A549 (cell line): ENCODE measurements at regions of chr11 and their contacts with region 1.

Region 1: GRCh38 chr11:69101115-69101791 is 52.5 kb downstream of the TPCN2 start:
- DNase-seq: peak; percentile 81 to 91
- ATAC-seq: peak; percentile 80 to 89
- H3K4me3 ChIP-seq: no peak overlapping the region
- H3K27ac ChIP-seq: peak overlapping the region; percentile 63 to 71; a peak in 5 of 6 replicates
- H3K4me1 ChIP-seq: peaks cover 28% of the 10 kb centered on the region
- CTCF ChIP-seq: peak; percentile 97
- EP300 ChIP-seq: no peak
- POLR2A ChIP-seq: no peak
- RAD21 ChIP-seq: peak; percentile 99

Region 2: DNA sequence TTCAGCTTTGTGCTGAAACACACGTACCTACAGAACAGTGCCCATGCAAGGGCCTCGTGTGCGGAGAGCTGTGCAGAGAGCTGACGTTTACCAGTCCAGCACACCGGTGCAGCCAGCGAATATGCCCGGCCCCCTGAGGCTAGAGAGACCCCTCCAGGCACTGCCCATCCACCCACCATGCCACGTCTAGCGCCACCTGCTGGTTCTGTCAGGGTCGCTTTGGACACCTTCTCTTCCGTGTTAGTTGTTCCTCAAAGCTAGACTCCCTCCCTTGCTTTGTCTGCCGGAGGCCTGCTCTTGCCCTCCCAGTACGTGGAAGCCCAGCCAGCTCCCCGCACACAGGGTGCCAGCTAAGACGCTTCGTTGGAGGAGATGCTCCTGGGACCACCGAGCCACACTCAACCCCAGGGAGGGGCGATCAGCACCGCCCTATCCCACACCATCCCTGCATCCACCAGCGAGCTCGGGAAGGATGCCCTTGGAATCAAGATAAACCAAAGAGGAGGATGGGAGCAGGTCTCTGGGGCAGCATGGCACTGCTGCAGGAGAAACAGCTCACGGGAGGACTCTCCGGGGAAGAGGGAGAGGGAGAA is 302.9 kb before region 1 on chr11:
- CTCF ChIA-PET with region 1: no interaction called
- POLR2A ChIA-PET with region 1: no interaction called
- DNase-seq: no peak
- ATAC-seq: peak; percentile 39 to 85; a peak in 5 of 6 replicates
- H3K4me3 ChIP-seq: no peak overlapping the region
- H3K27ac ChIP-seq: no peak overlapping the region
- H3K4me1 ChIP-seq: no peaks in the 10 kb centered on the region
- CTCF ChIP-seq: peak; percentile 48
- EP300 ChIP-seq: no peak
- POLR2A ChIP-seq: no peak
- RAD21 ChIP-seq: peak; percentile 28 to 33; a peak in 2 of 5 replicates

Region 3: GRCh38 chr11:69014084-69014851 is 87.0 kb before region 1 on chr11:
- CTCF ChIA-PET with region 1: no interaction called
- POLR2A ChIA-PET with region 1: no interaction called
- DNase-seq: no peak
- ATAC-seq: no peak
- H3K4me3 ChIP-seq: no peak overlapping the region
- H3K27ac ChIP-seq: no peak overlapping the region
- H3K4me1 ChIP-seq: peaks cover 16% of the 10 kb centered on the region
- CTCF ChIP-seq: no peak
- EP300 ChIP-seq: no peak
- POLR2A ChIP-seq: no peak
- RAD21 ChIP-seq: no peak

Region 4: DNA sequence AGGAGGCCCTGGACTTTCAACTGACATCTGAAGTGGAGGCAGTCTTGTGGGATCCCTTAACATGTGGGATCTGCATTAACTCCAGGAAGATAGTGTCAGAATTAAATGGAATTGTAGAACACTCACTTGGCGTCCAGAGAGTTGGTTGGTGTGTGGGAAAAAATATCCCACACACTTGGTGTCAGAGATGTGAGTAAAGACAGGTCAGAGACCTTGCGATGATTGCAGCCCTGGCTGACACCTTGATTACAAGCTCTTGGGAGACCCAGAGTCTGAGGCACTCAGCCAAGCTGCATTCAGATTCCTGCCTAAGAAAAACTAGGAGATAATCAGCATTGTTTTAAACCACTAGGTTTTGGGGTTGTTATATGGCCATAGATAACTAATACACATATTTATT is 59.7 kb before region 1 on chr11:
- CTCF ChIA-PET with region 1: no interaction called
- POLR2A ChIA-PET with region 1: no interaction called
- DNase-seq: no peak
- ATAC-seq: no peak
- H3K4me3 ChIP-seq: no peak overlapping the region
- H3K27ac ChIP-seq: no peak overlapping the region
- H3K4me1 ChIP-seq: peaks cover 11% of the 10 kb centered on the region; the same call in 2 of the 3 replicates
- CTCF ChIP-seq: no peak
- EP300 ChIP-seq: no peak
- POLR2A ChIP-seq: no peak
- RAD21 ChIP-seq: no peak

Region 5: DNA sequence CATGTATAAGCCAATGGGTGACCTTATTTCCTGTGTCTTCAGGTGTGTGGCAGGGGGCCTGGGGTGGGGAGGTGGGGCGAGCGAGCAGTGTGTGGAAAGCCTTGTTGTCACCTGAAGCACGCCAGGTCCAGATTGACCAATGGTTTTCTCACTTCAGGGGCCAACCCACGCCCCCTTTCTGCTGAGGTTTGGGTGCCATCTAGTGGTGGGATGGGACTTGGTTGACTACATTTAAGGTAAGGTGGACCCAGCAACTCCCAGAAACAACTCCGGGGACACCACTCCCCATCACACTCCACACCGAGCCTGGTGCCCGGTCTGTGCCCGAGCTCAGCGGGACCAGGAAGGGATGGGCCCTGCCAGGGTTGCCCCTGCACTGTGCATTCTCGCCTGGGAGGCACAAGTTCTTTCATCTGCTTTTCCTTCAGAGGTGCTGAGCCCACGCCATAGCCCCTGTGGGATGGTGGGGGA is 12.5 kb before region 1 on chr11:
- CTCF ChIA-PET with region 1: interaction called, 65 read pairs
- POLR2A ChIA-PET with region 1: no interaction called
- DNase-seq: peak; percentile 83 to 97
- ATAC-seq: peak; percentile 76 to 92
- H3K4me3 ChIP-seq: no peak overlapping the region
- H3K27ac ChIP-seq: no peak overlapping the region
- H3K4me1 ChIP-seq: peaks cover 7% of the 10 kb centered on the region; the same call in 2 of the 3 replicates
- CTCF ChIP-seq: peak; percentile 87
- EP300 ChIP-seq: no peak
- POLR2A ChIP-seq: no peak
- RAD21 ChIP-seq: peak; percentile 90 to 95

Region 6: GRCh38 chr11:69131644-69132300 is 30.5 kb after region 1 on chr11:
- CTCF ChIA-PET with region 1: interaction called, 16 read pairs
- POLR2A ChIA-PET with region 1: no interaction called
- DNase-seq: peak; percentile 68 to 86
- ATAC-seq: peak; percentile 88 to 94
- H3K4me3 ChIP-seq: no peak overlapping the region
- H3K27ac ChIP-seq: peak overlapping the region; percentile 63 to 75
- H3K4me1 ChIP-seq: peaks cover 15% of the 10 kb centered on the region
- CTCF ChIP-seq: peak; percentile 88
- EP300 ChIP-seq: no peak
- POLR2A ChIP-seq: no peak
- RAD21 ChIP-seq: peak; percentile 88 to 90

Region 7: GRCh38 chr11:69253028-69253427 is 151.8 kb after region 1 on chr11:
- CTCF ChIA-PET with region 1: no interaction called
- POLR2A ChIA-PET with region 1: no interaction called
- DNase-seq: peak in 1 of 2 experiments; percentile 49
- ATAC-seq: peak in 1 of 2 experiments; percentile 61; a peak in 3 of 6 replicates
- H3K4me3 ChIP-seq: no peak overlapping the region
- H3K27ac ChIP-seq: no peak overlapping the region
- H3K4me1 ChIP-seq: no peaks in the 10 kb centered on the region
- CTCF ChIP-seq: no peak
- EP300 ChIP-seq: no peak
- POLR2A ChIP-seq: no peak
- RAD21 ChIP-seq: no peak

Region 8: DNA sequence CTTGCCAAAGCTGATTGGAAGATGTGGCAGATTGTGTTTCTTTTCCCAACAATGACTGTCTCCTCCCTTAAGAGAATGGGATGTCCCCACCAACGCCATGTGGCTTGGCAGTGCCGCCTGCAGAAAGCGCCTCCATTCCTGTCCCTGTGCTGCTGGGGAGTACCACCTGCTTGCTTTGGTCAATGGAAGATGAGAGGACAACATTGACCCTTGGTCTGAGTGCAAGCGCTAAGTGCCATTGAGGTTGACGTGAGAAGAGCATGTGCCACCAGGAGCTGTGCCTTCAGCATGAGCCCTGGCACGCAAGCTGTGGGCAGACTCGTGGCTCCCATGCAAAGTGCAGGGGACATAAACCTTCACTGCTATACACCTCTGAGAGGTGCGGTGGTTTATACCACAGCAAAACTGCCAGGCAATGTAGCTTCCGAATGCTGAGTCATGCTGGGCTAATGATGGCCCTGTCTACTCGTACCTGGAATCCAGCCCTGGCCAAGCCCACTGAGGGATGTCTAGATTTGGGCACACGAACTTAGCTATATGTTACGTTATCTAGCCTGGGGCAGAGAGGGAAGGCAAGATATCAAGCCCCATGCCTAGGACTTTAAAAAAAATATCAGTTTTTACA is 234.6 kb after region 1 on chr11:
- CTCF ChIA-PET with region 1: interaction called, 14 read pairs
- POLR2A ChIA-PET with region 1: no interaction called
- DNase-seq: no peak
- ATAC-seq: peak in 1 of 2 experiments; percentile 26; a peak in 1 of 6 replicates
- H3K4me3 ChIP-seq: no peak overlapping the region
- H3K27ac ChIP-seq: peak overlapping the region; percentile 68 to 79
- H3K4me1 ChIP-seq: peaks cover 33% of the 10 kb centered on the region
- CTCF ChIP-seq: no peak
- EP300 ChIP-seq: no peak
- POLR2A ChIP-seq: no peak
- RAD21 ChIP-seq: no peak

Region 9: DNA sequence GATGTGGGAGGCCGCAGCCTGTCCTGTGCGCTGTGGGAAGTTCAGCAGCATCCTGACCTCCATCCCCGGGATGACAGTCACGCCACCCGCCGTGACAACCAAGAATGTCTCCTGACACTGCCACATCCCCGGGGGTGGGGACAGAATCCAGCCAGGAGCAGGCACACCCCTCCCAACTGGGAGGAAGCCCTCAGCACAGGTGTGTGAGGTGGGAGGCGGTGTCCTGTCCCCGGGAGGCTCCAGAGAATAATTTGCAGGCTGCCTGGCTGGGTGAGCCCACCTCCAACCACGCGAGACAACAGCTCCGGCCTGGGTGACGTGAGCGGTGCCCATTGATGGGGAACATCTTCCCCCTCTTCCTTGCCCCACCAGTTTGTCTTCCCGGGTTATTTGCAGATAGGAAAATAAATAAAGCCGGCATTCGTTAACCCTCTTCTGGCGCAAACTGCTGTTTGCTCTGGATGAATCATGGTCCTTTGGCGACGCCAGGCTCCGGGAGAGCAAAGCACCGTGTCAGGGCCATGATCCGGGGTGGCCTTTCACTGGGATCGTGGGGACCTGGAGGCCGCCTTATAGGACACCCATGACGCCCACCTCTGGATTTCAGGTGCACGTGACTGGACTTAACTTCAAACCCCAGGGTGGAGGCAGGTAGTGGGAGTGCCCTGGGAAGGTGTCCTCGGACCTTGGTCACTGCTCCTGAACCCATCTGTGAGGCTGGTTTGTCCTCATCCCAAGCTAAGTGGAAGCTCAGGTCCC is 553.5 kb after region 1 on chr11:
- CTCF ChIA-PET with region 1: interaction called, 44 read pairs
- POLR2A ChIA-PET with region 1: no interaction called
- DNase-seq: peak; percentile 88 to 95
- ATAC-seq: peak; percentile 66 to 75
- H3K4me3 ChIP-seq: peak overlapping the region; percentile 33
- H3K27ac ChIP-seq: peak overlapping the region; percentile 87 to 90
- H3K4me1 ChIP-seq: peaks cover 64% of the 10 kb centered on the region
- CTCF ChIP-seq: no peak
- EP300 ChIP-seq: peak; percentile 85 to 90; a peak in 4 of 5 replicates
- POLR2A ChIP-seq: no peak; the same call in 1 of the 2 replicates
- RAD21 ChIP-seq: peak; percentile 40 to 49; a peak in 4 of 5 replicates

Region 10: GRCh38 chr11:69683764-69684333 is 582.6 kb after region 1 on chr11:
- CTCF ChIA-PET with region 1: interaction called, 39 read pairs
- POLR2A ChIA-PET with region 1: no interaction called
- DNase-seq: peak in 1 of 2 experiments; percentile 64
- ATAC-seq: peak in 1 of 2 experiments; percentile 75; a peak in 3 of 6 replicates
- H3K4me3 ChIP-seq: no peak overlapping the region
- H3K27ac ChIP-seq: no peak overlapping the region
- H3K4me1 ChIP-seq: peaks cover 12% of the 10 kb centered on the region; the same call in 2 of the 3 replicates
- CTCF ChIP-seq: peak; percentile 66
- EP300 ChIP-seq: no peak
- POLR2A ChIP-seq: no peak
- RAD21 ChIP-seq: peak; percentile 77 to 89